ENCODE measurements at regions of chr16 and their contacts with region 1.

Region 1: DNA sequence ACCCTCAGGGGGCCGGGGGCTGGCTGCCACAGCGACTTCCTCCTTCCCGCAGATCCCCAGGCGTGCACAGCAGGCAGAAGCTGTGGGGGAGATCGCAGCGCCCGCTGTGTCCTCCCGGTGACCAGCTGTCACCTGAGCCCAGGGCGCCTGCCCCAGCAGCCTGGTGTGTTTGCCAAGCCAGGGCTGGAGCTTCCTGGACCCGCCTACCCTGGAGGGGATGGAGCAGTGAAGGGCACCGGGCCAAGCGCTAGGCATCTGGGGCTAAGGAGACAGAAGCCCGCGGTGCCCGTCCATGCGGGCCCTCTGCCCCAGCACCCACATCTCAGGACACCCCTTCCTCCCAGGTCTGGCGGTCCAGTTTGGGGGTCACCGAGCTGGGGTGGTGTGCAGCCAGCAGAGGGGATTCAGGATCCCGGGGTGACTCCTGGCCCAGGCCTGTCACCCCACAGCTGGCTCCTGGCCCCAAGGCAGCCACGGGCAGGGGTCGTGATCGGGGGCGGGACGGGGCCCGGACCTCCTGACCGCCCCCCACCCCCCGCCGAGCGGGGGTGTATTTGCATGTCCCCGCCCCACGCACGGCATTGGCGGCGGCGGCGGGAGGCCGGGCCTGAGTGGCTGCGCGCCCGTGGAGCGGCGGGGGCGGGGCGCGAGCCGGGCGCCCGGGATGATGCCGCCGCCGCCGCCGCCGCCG is at the start of gene RAB26:
- DNase-seq: peak; percentile 59
- ATAC-seq: peak; percentile 54
- H3K4me3 Mint-ChIP-seq: peak within 1 kb of the TSS; percentile 18
- H3K27ac Mint-ChIP-seq: no peak within 1 kb of the TSS
- H3K4me1 Mint-ChIP-seq: peaks cover 26% of the 10 kb centered on the region
- H3K27me3 Mint-ChIP-seq: peaks cover 7% of the 10 kb centered on the region
- total RNA-seq, gene RAB26: 0.68 to 0.70 TPM

Region 2: GRCh38 chr16:2023098-2023925 is 124.8 kb before region 1 on chr16:
- CTCF ChIA-PET with region 1: interaction called, 118 read pairs
- DNase-seq: peak; percentile 95
- ATAC-seq: peak; percentile 82
- H3K4me3 Mint-ChIP-seq: peak overlapping the region; percentile 56
- H3K27ac Mint-ChIP-seq: peak overlapping the region; percentile 64
- H3K4me1 Mint-ChIP-seq: peaks cover 17% of the 10 kb centered on the region
- H3K27me3 Mint-ChIP-seq: peaks cover 44% of the 10 kb centered on the region

Measured in activated CD8-positive, alpha-beta memory T cell treated with anti-CD3 and anti-CD28 coated beads, Interleukin-2, amount 10 ng/mL, durations not matched to agents 7 days and 5 days (primary cell).